ENCODE measurements at regions of chr18 and their contacts with region 1.

Region 1: GRCh38 chr18:76450452-76451395 is 44.3 kb downstream of the ZNF516 start:
- DNase-seq: peak; percentile 74
- ATAC-seq: peak; percentile 76

Region 2: GRCh38 chr18:76492669-76493212 is 42.0 kb after region 1 on chr18:
- intact Hi-C with region 1: loop called (anchors 5 kb)
- DNase-seq: peak; percentile 100
- ATAC-seq: peak; percentile 92

Measured in left ventricle myocardium superior (tissue), 1 donor.